SK-N-SH (cell line): ENCODE measurements at regions of chr5 and their contacts with region 1.

Region 1: DNA sequence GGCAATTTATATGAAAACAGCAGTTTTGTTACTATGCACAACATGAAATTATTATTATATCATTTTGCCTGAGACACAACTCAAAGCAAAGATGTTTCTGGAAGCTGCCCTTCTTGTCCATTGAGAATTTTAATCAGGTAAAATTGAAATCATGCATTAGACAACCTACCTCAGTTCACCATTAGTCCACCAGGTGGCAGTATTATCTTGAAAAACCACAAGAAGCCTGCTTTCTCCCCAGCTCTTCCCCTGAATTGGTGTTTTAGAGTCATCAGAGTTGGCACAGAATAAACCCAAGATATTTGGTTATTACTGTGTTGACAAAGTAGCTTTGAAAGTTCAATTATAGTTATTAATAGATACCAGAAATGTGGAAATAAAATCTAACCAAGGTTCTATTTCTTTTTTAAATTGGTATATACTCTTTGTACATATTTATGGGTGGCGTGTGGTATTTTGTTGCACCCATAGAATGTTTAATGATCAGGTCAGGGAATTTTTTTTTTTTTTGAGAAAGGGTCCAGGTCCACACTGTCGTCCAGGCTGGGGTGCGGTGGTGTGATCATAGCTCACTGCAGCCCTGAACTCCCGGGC is 25.7 kb downstream of the UTP15 start:
- DNase-seq: peak; percentile 54
- H3K4me3 ChIP-seq: no peak overlapping the region
- H3K27ac ChIP-seq: peak overlapping the region in 1 of 2 experiments; percentile 70; a peak in 2 of 4 replicates
- H3K4me1 ChIP-seq: peaks cover 3 to 5% of the 10 kb centered on the region in 2 experiments; a peak in 3 of 4 replicates
- H3K27me3 ChIP-seq: no peaks in the 10 kb centered on the region
- CTCF ChIP-seq: peak; percentile 91
- EP300 ChIP-seq: no peak
- RAD21 ChIP-seq: peak; percentile 95

Region 2: DNA sequence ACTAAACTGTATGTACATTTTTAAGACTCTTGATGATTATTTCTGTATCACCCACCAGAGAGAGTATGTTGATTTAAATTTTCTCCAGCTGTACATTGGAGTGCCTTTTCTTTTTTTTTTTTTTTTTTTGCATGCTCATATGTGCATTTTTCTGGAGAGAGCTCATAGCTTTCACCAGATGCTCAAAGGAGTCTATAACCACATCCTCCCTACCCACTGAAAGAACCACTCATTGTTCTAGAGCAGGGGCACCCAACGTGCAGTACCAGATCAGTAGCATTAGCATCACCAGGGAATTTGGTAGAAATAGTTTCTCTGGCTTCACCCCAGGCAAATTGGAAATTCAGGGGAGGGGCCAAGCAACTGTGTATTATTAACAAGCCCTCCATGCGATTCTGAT is 524.7 kb before region 1 on chr5:
- CTCF ChIA-PET with region 1: no interaction called
- POLR2A ChIA-PET with region 1: no interaction called
- DNase-seq: no peak
- H3K4me3 ChIP-seq: no peak overlapping the region
- H3K27ac ChIP-seq: no peak overlapping the region
- H3K4me1 ChIP-seq: no peaks in the 10 kb centered on the region
- H3K27me3 ChIP-seq: no peaks in the 10 kb centered on the region
- CTCF ChIP-seq: no peak
- EP300 ChIP-seq: no peak
- RAD21 ChIP-seq: no peak

Region 3: DNA sequence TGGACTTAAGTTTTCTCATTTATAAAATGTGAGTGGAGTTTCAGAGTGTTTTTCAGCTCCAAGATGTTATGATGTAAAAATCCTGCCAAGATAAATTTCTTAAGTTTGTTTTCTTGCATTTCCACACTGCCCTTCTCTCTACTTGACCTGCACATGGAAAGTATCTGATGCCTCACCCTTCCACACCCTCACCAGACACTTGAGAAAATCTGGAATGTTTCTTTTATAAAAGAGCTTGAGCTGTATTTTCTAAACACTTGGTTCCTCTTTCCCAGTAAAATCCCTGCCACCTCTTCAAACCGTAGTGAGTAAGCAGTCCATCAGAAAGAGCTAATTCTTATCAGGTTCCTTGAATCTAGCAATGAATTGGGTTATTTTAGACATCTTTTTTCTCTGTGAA is 185.5 kb before region 1 on chr5:
- CTCF ChIA-PET with region 1: no interaction called
- POLR2A ChIA-PET with region 1: no interaction called
- DNase-seq: no peak
- H3K4me3 ChIP-seq: no peak overlapping the region
- H3K27ac ChIP-seq: no peak overlapping the region
- H3K4me1 ChIP-seq: peaks cover 0 to 13% of the 10 kb centered on the region in 2 experiments; a peak in 2 of 4 replicates
- H3K27me3 ChIP-seq: no peaks in the 10 kb centered on the region
- CTCF ChIP-seq: no peak
- EP300 ChIP-seq: no peak
- RAD21 ChIP-seq: no peak

Region 4: GRCh38 chr5:73605227-73606020 is 14.2 kb after region 1 on chr5:
- CTCF ChIA-PET with region 1: interaction called, 13 read pairs
- POLR2A ChIA-PET with region 1: no interaction called
- DNase-seq: no peak
- H3K4me3 ChIP-seq: no peak overlapping the region
- H3K27ac ChIP-seq: no peak overlapping the region
- H3K4me1 ChIP-seq: no peaks in the 10 kb centered on the region; a peak in 1 of 4 replicates
- H3K27me3 ChIP-seq: no peaks in the 10 kb centered on the region
- CTCF ChIP-seq: no peak
- EP300 ChIP-seq: no peak
- RAD21 ChIP-seq: no peak

Region 5: GRCh38 chr5:73751254-73751914 is 160.2 kb after region 1 on chr5:
- CTCF ChIA-PET with region 1: interaction called, 11 read pairs
- POLR2A ChIA-PET with region 1: no interaction called
- DNase-seq: no peak
- H3K4me3 ChIP-seq: no peak overlapping the region
- H3K27ac ChIP-seq: no peak overlapping the region
- H3K4me1 ChIP-seq: no peaks in the 10 kb centered on the region; a peak in 1 of 4 replicates
- H3K27me3 ChIP-seq: no peaks in the 10 kb centered on the region
- CTCF ChIP-seq: no peak
- EP300 ChIP-seq: no peak
- RAD21 ChIP-seq: no peak

Region 6: DNA sequence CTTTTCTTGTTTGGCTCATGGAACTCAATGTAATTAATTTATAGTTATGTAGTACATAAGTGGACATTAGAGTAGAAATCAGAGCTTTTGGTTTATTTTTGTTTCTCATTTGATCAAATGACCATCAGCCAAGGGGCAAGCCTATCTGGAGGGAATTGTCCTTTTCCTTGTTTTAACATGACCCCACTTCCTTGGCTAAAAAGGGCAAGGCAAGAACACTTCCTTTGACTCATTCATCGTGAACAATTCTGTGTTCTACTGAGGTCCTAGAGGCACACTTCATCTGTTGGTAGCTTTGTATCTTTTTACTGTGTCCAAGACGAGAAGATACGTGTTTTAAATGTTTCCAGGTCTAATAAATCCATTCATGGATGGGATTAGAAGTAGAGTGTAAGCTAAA is 183.7 kb after region 1 on chr5:
- CTCF ChIA-PET with region 1: interaction called, 19 read pairs
- POLR2A ChIA-PET with region 1: no interaction called
- DNase-seq: no peak
- H3K4me3 ChIP-seq: no peak overlapping the region
- H3K27ac ChIP-seq: no peak overlapping the region
- H3K4me1 ChIP-seq: no peaks in the 10 kb centered on the region
- H3K27me3 ChIP-seq: no peaks in the 10 kb centered on the region
- CTCF ChIP-seq: no peak
- EP300 ChIP-seq: no peak
- RAD21 ChIP-seq: no peak

Region 7: GRCh38 chr5:73792687-73793320 is 201.6 kb after region 1 on chr5:
- CTCF ChIA-PET with region 1: interaction called, 398 read pairs
- POLR2A ChIA-PET with region 1: no interaction called
- DNase-seq: peak; percentile 67
- H3K4me3 ChIP-seq: no peak overlapping the region
- H3K27ac ChIP-seq: no peak overlapping the region
- H3K4me1 ChIP-seq: peaks cover 3 to 10% of the 10 kb centered on the region in 2 experiments; a peak in 3 of 4 replicates
- H3K27me3 ChIP-seq: no peaks in the 10 kb centered on the region
- CTCF ChIP-seq: peak; percentile 99
- EP300 ChIP-seq: no peak
- RAD21 ChIP-seq: peak; percentile 99

Region 8: GRCh38 chr5:73902327-73903051 is 311.3 kb after region 1 on chr5:
- CTCF ChIA-PET with region 1: interaction called, 10 read pairs
- POLR2A ChIA-PET with region 1: no interaction called
- DNase-seq: peak; percentile 58
- H3K4me3 ChIP-seq: no peak overlapping the region; a peak in 1 of 4 replicates
- H3K27ac ChIP-seq: no peak overlapping the region; a peak in 1 of 4 replicates
- H3K4me1 ChIP-seq: peaks cover 0 to 28% of the 10 kb centered on the region in 2 experiments; a peak in 2 of 4 replicates
- H3K27me3 ChIP-seq: no peaks in the 10 kb centered on the region
- CTCF ChIP-seq: peak; percentile 87
- EP300 ChIP-seq: no peak
- RAD21 ChIP-seq: peak; percentile 94